ENCODE measurements at regions of chr1 and their contacts with region 1.

Region 1: DNA sequence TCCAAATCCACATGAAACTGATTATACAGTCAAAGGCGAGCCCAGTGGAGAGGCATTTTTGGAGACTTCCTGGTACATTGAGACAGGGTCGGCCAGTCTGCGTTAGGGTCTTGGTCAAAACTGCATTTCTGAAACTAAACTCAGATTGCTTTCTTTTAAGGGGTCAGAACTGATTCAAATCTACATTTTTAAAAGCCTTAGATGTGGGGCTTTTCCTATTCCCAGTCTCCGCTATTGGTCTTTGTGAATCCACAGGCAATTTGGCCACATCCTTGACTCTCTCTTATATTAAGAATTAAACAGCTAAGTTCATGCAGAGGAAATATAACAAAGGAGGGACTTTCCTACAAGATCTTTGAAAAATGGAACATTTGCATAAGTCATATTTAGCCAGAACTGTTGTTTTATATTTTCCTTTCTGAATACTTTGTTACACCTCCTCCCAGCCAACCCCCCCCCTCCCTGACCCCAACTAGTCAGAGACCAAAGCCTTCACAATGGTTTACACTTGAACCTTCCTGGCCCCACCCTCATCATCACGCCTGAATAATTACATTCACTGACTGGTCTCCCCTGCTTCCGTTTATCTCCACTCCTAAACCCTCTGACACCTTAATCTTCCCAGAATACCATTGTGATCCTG is 30.9 kb downstream of the SELL start:
- DNase-seq: peak in 1 of 35 experiments; percentile 23
- ATAC-seq: peak; percentile 51 to 61 (median 55)
- H3K4me3 ChIP-seq: no peak overlapping the region
- H3K4me3 Mint-ChIP-seq: peak overlapping the region; percentile 37 to 58 (median 41)
- H3K27ac ChIP-seq: peak overlapping the region; percentile 19
- H3K27ac Mint-ChIP-seq: peak overlapping the region; percentile 81 to 82
- H3K4me1 ChIP-seq: peaks cover 35% of the 10 kb centered on the region in 2 experiments
- H3K4me1 Mint-ChIP-seq: peaks cover 57 to 67% (median 62%) of the 10 kb centered on the region in 3 donors
- H3K27me3 ChIP-seq: no peaks in the 10 kb centered on the region
- H3K27me3 Mint-ChIP-seq: no peaks in the 10 kb centered on the region

Region 2: GRCh38 chr1:169634145-169634544 is 46.4 kb before region 1 on chr1:
- CTCF ChIA-PET with region 1: no interaction called
- POLR2A ChIA-PET with region 1: interaction called in 1 of 2 experiments, 13 read pairs
- DNase-seq: no peak
- ATAC-seq: no peak
- H3K4me3 ChIP-seq: no peak overlapping the region
- H3K4me3 Mint-ChIP-seq: no peak overlapping the region
- H3K27ac ChIP-seq: no peak overlapping the region
- H3K27ac Mint-ChIP-seq: no peak overlapping the region
- H3K4me1 ChIP-seq: peaks cover 4 to 9% of the 10 kb centered on the region in 2 experiments
- H3K4me1 Mint-ChIP-seq: peaks cover 9 to 17% (median 12%) of the 10 kb centered on the region in 3 donors
- H3K27me3 ChIP-seq: no peaks in the 10 kb centered on the region
- H3K27me3 Mint-ChIP-seq: no peaks in the 10 kb centered on the region

Region 3: DNA sequence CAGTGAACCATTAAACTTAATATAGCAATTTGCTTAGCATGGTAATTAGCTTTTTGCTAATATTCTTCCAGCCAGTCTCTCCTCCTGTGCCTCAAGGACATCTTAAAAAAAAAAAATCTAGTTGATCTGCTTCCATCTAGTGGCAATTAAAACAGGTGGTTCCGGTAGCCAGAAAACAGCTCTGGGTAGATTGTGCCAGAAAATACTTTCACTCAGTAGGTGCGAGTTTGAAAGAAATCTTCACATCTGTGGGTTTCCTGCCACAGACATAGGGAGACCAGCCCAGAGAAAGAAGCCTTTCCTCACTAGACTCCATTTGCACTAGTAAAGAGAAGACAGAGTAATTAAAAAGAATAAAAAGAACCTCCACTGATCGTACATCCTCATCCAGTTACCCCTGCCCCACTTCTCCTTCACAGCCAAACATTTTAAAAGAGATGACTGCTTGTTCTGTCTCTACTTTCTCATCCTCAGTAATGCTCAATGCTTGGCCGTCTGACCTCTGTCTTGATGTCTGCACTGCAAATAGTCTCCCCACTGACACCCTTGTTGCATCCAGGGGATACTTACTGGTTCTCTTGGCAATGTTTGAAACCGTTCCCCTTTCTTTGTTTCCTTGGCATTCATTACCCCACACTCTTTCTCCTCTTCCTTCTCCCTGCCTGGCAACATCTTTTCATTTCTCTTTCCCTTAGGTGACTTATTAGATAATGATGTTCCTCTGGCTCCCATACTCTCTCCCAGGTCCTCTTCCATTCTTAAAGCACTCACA is 14.0 kb after region 1 on chr1:
- CTCF ChIA-PET with region 1: interaction called in 1 of 2 experiments, 6 read pairs
- POLR2A ChIA-PET with region 1: interaction called in 1 of 2 experiments, 16 read pairs
- DNase-seq: peak in 31 of 35 experiments; percentile 11 to 80 (median 50)
- ATAC-seq: peak; percentile 62 to 70 (median 64)
- H3K4me3 ChIP-seq: peak overlapping the region in 1 of 2 donors; percentile 15
- H3K4me3 Mint-ChIP-seq: peak overlapping the region; percentile 32 to 91 (median 52)
- H3K27ac ChIP-seq: peak overlapping the region; percentile 85
- H3K27ac Mint-ChIP-seq: peak overlapping the region in 1 of 2 donors; percentile 93
- H3K4me1 ChIP-seq: peaks cover 81 to 91% of the 10 kb centered on the region in 2 experiments
- H3K4me1 Mint-ChIP-seq: peaks cover 17 to 98% (median 97%) of the 10 kb centered on the region in 3 donors
- H3K27me3 ChIP-seq: no peaks in the 10 kb centered on the region
- H3K27me3 Mint-ChIP-seq: no peaks in the 10 kb centered on the region

Region 4: DNA sequence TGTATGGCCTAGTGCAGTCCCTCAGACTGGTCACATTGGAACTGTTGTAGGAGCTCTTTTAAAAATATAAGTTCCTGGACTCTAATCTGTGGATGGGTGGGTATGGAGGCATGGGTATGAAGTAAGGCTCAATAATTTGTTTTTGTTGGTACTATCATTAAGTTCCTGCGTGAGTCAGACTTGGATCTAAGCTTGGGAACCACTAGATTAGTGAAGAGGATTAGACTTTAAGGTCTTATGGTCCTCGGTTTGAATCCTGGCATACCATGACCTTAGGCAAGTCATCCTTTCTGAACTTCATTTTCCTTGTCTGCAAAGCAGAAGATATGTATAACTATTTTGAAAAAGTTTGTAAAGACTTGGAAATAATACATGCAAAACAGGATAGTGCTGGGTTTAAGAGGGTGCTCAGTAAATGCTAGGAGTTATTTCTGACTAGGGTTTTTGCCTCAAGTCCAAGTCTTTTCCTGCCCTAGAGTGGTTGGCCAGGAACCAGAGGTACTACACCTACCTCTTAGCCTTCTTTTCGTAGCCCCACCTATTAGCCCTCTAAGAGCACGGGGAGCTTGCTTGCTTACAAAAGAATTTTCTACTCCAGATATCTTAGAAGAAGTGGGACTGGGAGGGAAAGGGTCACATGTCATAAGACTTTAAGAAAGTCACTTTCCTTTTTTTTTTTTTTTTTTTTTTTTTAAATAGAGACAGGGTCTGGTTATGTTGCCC is 152.8 kb after region 1 on chr1:
- CTCF ChIA-PET with region 1: no interaction called
- POLR2A ChIA-PET with region 1: interaction called in 1 of 2 experiments, 17 read pairs
- DNase-seq: no peak
- ATAC-seq: no peak
- H3K4me3 ChIP-seq: no peak overlapping the region
- H3K4me3 Mint-ChIP-seq: no peak overlapping the region
- H3K27ac ChIP-seq: no peak overlapping the region
- H3K27ac Mint-ChIP-seq: no peak overlapping the region
- H3K4me1 ChIP-seq: no peaks in the 10 kb centered on the region
- H3K4me1 Mint-ChIP-seq: no peaks in the 10 kb centered on the region
- H3K27me3 ChIP-seq: no peaks in the 10 kb centered on the region
- H3K27me3 Mint-ChIP-seq: no peaks in the 10 kb centered on the region

Region 5: DNA sequence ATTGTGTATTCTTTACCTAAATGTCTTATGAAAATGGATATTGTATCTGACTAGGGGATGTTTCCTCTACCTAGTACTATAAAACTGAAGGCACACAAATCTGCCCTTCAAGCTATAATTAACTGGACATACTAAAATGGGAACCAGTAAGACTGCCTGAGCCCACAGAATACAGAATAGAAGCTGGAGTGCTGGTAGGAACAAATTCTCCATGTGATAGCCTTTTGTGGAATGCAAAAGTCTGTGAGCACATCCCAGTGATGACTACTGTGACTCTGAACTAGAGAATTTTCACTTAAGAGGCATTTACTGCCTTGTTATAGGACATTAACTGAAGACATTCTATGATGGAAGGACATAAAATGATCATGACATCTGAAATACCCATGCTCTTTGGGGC is 363.7 kb after region 1 on chr1:
- CTCF ChIA-PET with region 1: no interaction called
- POLR2A ChIA-PET with region 1: no interaction called
- DNase-seq: no peak
- ATAC-seq: no peak
- H3K4me3 ChIP-seq: no peak overlapping the region
- H3K4me3 Mint-ChIP-seq: no peak overlapping the region
- H3K27ac ChIP-seq: no peak overlapping the region
- H3K27ac Mint-ChIP-seq: no peak overlapping the region
- H3K4me1 ChIP-seq: no peaks in the 10 kb centered on the region
- H3K4me1 Mint-ChIP-seq: peaks cover 0 to 2% (median 2%) of the 10 kb centered on the region in 3 donors
- H3K27me3 ChIP-seq: no peaks in the 10 kb centered on the region
- H3K27me3 Mint-ChIP-seq: no peaks in the 10 kb centered on the region